ENCODE measurements at regions of chr1 and their contacts with region 1.

Region 1: GRCh38 chr1:89632657-89633247 is at the start of gene LRRC8C:
- DNase-seq: peak; percentile 84
- H3K4me3 Mint-ChIP-seq: peak within 1 kb of the TSS; percentile 92
- H3K27ac Mint-ChIP-seq: peak within 1 kb of the TSS; percentile 96
- H3K4me1 Mint-ChIP-seq: peaks cover 77% of the 10 kb centered on the region
- H3K27me3 Mint-ChIP-seq: no peaks in the 10 kb centered on the region
- total RNA-seq, gene LRRC8C: 64.3 and 66.1 TPM in 2 replicates

Region 2: GRCh38 chr1:89603651-89604413 is 28.9 kb before region 1 on chr1:
- intact Hi-C with region 1: loop called (anchors 5 kb)
- DNase-seq: no peak
- H3K4me3 Mint-ChIP-seq: peak overlapping the region; percentile 56
- H3K27ac Mint-ChIP-seq: peak overlapping the region; percentile 99
- H3K4me1 Mint-ChIP-seq: peaks cover 97% of the 10 kb centered on the region
- H3K27me3 Mint-ChIP-seq: no peaks in the 10 kb centered on the region

Region 3: GRCh38 chr1:89657886-89658285 is 25.1 kb after region 1 on chr1:
- intact Hi-C with region 1: loop called (anchors 1 kb)
- DNase-seq: peak; percentile 24
- H3K4me3 Mint-ChIP-seq: peak overlapping the region; percentile 62
- H3K27ac Mint-ChIP-seq: peak overlapping the region; percentile 72
- H3K4me1 Mint-ChIP-seq: peaks cover 91% of the 10 kb centered on the region
- H3K27me3 Mint-ChIP-seq: no peaks in the 10 kb centered on the region

Region 4: DNA sequence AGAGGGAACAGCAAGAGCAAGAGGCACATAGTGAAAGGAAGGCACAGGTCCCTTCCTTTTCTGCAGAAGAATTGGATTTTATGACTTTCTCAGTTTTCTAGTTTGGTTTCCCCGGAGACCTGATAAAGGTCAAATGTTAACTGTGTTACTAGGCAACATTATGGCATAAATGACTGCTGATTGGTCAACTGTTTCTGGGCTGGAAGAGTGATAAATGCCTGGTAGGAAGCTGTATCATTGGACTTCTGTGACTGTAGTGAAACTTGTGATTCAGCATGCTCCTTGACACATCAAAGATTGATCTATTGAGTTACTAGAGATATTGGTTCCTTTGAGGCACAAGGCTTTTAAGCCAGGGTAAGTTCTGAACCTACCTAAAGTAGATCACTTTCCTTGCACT is 55.9 kb after region 1 on chr1:
- intact Hi-C with region 1: no loop called
- DNase-seq: no peak
- H3K4me3 Mint-ChIP-seq: no peak overlapping the region
- H3K27ac Mint-ChIP-seq: peak overlapping the region; percentile 81
- H3K4me1 Mint-ChIP-seq: peaks cover 73% of the 10 kb centered on the region
- H3K27me3 Mint-ChIP-seq: no peaks in the 10 kb centered on the region

Region 5: DNA sequence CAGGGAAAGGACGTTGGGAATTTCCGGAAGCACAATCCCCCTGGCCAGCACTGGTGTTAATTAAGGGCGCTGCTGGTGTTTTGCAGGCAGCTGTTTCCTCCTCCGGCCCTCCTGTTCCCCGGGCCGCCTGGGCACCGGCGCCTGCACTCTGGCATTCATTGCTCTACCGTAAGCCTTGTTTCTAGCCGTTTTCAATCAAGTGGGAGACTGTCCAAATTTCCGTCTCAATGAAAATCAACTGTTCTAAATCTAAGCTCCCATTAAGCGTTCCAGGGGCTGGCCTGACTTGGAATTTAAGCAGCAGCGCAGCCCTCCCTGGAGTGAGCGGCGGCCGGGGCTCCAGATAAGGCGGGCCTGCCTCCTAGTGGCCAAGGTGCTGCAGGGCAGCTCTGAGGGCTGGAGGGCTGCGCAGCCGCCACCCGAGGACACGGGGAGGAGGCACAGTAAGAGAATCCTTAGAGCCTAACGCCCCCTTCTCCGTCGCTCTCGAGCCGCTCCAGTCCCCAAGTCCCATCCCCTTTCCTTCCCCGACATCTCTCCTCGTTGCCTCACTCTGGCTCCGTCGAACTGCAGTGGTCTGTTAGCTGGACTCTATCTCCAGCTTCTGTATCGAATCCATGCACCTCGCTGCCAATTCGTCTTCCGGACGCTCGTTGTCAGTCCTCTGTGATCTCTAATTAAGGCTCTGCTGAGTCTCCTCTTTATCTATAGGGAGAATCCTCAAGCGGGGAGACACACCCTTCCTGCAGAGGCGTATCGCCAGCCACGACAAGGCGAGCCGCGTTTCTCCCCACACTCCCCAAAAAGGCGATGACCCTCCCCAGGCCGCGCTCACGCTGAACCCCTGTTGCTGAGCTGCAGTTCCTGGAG is 130.3 kb after region 1 on chr1:
- intact Hi-C with region 1: loop called (anchors 1 kb)
- DNase-seq: peak; percentile 78
- H3K4me3 Mint-ChIP-seq: peak overlapping the region; percentile 92
- H3K27ac Mint-ChIP-seq: peak overlapping the region; percentile 93
- H3K4me1 Mint-ChIP-seq: peaks cover 63% of the 10 kb centered on the region
- H3K27me3 Mint-ChIP-seq: no peaks in the 10 kb centered on the region

Region 6: DNA sequence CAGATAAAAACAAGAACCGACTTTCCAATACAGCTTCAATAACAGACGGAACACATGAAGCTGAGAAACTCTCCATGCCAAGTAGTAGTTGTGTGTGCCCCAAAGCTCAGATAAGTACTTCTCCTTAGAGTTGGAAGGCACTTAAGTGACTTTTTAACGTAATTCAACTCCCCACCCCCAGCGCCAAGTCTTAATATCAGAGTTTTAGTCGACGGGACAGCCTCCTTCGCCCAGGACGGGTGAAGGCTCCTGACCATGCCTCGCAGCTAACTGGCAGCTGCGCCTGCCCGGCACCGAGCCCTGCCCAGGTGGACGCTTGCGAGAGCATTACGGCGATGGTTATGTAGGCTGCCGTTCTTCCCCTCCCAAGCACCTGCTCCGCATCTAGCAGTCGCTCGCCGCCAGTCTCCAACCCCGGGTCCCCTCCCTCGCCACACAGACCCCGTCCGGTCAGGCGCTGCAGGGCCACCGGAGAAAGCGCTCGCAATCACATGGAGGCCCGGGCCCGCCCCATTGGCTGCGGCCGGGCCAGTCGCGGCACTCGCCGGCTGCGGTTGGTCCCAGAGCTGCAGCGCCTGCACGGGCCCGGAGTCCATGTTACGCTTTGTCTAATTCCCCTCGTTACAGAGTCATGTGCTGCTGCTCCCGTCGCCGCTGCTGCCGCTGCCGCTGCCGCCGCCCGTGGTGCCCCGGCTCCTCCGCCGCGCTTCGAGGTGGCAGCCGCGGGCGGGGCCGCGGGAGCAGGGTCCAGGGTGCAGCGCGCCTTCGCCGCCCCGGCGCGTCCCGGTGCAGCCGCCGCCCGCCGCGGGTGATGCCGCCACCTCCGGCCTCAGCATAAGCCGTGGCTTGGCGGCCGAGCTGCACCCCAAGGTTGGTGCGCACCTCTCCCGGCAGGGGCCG is 187.9 kb after region 1 on chr1 and contains the start of gene LRRC8D:
- intact Hi-C with region 1: loop called (anchors 1 kb)
- DNase-seq: peak; percentile 72
- H3K4me3 Mint-ChIP-seq: peak within 1 kb of the TSS; percentile 84
- H3K27ac Mint-ChIP-seq: peak within 1 kb of the TSS; percentile 68
- H3K4me1 Mint-ChIP-seq: peaks cover 15% of the 10 kb centered on the region
- H3K27me3 Mint-ChIP-seq: peaks cover 8% of the 10 kb centered on the region
- total RNA-seq, gene LRRC8D: 43.3 and 45.0 TPM in 2 replicates

Region 7: DNA sequence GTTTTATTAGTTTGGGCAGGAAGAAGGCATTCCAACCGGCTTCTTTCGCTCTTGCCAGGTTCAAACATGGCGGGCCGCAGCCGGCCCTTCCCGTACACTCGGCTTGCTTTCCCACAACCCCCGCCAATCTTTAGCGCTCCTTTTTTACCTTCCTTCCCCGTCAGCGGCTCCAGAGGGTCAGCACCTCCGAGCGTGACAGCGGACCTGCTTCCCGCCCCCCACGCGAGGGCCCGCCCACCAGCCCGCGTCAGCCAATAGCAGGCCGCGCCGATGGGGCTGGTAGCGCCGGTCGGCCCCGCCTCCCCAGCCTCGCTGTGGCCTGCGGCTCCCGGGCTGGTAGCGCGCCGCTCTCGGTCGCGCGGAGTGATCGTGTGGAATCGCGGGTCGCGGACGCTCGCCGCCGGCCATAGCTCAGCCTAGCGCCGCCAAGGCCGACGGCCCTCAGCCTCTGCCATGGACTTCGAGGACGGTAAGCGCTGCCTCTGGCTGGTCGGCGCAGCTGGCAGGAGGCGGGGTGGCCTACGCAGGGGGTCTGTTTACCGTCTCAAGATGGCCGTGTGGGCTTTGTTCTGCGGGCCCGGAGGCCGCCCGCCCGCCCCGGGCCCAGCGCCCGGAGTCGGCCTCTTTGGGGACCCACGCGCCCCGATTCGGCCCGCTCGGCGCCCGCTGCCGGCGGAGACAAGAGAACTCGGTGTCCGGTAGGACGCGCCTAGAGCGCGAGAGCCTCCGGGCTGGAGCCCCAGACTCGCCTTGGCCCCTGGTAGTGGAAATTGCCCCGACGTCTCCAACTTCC is 362.2 kb after region 1 on chr1 and contains the start of gene ZNF326:
- intact Hi-C with region 1: loop called (anchors 1 kb)
- DNase-seq: peak; percentile 93
- H3K4me3 Mint-ChIP-seq: peak within 1 kb of the TSS; percentile 99
- H3K27ac Mint-ChIP-seq: peak within 1 kb of the TSS; percentile 97
- H3K4me1 Mint-ChIP-seq: peaks cover 46% of the 10 kb centered on the region
- H3K27me3 Mint-ChIP-seq: no peaks in the 10 kb centered on the region
- total RNA-seq, gene ZNF326: 37.3 and 39.1 TPM in 2 replicates